ENCODE measurements at regions of chr19 and their contacts with region 1.

Region 1: DNA sequence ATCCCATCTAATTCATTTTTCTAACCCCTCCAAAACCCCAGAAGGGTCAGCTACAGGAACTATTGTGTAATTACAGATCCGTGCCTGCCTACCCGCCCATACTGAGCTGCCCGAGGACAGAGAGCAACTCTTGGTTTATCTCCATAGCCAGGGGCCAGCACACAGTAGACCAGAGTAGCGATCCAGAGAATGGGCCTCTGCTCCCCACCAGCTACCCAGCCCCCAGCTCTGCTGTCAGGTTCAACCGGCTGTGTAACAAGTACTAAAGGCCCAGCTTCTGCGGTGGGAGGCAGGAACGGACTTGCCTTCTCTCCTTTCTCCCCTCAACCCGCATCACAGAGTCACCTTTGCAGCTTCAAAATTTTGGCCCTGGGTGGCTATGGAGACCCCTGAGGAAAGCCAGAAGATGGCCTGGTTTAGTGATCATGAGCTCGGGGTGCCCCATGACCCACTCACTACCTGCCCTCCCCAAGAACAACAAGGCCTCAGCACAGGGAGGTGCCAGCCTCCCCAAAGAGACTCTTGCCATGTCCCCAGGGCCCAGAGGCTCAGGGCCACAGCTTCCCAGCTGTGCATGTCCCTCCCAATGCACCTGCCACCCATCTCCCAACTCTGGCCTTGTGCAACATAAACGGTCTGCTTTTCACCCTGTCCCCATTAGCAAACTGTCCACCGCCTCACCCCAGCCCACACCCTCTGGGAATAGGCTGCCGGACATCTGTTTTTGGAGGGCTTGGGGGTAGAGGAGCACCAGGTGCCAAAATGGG is 5.7 kb downstream of the CALM3 start:
- DNase-seq: no peak
- H3K4me3 ChIP-seq: no peak overlapping the region
- H3K27ac ChIP-seq: no peak overlapping the region
- H3K27me3 ChIP-seq: no peaks in the 10 kb centered on the region
- CTCF ChIP-seq: no peak

Region 2: GRCh38 chr19:46551164-46551563 is 55.7 kb before region 1 on chr19:
- CTCF ChIA-PET with region 1: no interaction called
- POLR2A ChIA-PET with region 1: no interaction called
- DNase-seq: no peak
- H3K4me3 ChIP-seq: no peak overlapping the region
- H3K27ac ChIP-seq: no peak overlapping the region
- H3K27me3 ChIP-seq: peaks cover 7% of the 10 kb centered on the region
- CTCF ChIP-seq: no peak

Region 3: GRCh38 chr19:46622118-46622446 is 15.2 kb after region 1 on chr19:
- CTCF ChIA-PET with region 1: interaction called, 7 read pairs
- POLR2A ChIA-PET with region 1: interaction called, 11 read pairs
- DNase-seq: no peak
- H3K4me3 ChIP-seq: peak overlapping the region; percentile 29; the same call in 1 of the 2 replicates
- H3K27ac ChIP-seq: no peak overlapping the region
- H3K27me3 ChIP-seq: no peaks in the 10 kb centered on the region
- CTCF ChIP-seq: no peak